ENCODE measurements at regions of chrX and their contacts with region 1.

Region 1: DNA sequence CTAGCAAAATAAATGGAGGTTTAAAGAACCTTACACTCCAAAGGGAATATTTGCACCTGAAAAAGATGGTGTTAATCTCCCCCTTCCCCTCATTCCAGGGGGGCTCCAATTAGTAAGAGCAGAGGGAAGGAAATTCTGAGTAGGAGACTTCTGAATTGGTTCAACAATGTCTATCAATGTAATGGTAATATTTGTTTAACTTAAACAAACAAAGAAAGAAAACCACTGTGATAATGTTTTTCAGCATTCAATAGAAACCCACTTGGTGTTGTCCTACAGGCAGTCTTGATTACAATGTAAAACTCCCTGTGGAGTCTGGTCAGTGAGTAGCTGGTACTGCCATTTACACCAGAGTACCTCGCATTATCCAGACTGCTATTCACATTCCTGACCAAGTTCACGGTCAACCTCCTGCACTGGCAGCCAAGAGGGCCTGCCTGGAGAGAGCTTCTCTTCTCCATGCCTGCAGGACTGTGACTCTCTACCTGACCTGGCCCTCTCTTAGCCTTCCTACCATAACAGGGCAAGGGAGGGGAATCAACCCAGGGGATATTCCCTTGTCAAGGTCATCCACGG is 3.0 kb upstream of the LONRF3 start:
- DNase-seq: no peak
- ATAC-seq: no peak
- H3K4me3 ChIP-seq: no peak overlapping the region
- H3K27ac ChIP-seq: no peak overlapping the region
- H3K4me1 ChIP-seq: peaks cover 5% of the 10 kb centered on the region
- H3K27me3 ChIP-seq: peaks cover 9% of the 10 kb centered on the region
- CTCF ChIP-seq: no peak

Region 2: GRCh38 chrX:118495061-118495921 is 476.2 kb before region 1 on chrX and contains the start of gene DOCK11:
- CTCF ChIA-PET with region 1: interaction called, 15 read pairs
- POLR2A ChIA-PET with region 1: no interaction called
- in situ Hi-C with region 1: no loop called
- intact Hi-C with region 1: no loop called
- DNase-seq: no peak
- ATAC-seq: peak; percentile 89
- H3K4me3 ChIP-seq: peak within 1 kb of the TSS; percentile 53 to 59
- H3K27ac ChIP-seq: no peak within 1 kb of the TSS
- H3K4me1 ChIP-seq: peaks cover 8% of the 10 kb centered on the region
- H3K27me3 ChIP-seq: peaks cover 12% of the 10 kb centered on the region
- CTCF ChIP-seq: no peak
- total RNA-seq, gene DOCK11: 2.0 TPM

Region 3: GRCh38 chrX:119055687-119056086 is 84.2 kb after region 1 on chrX:
- CTCF ChIA-PET with region 1: interaction called, 12 read pairs
- POLR2A ChIA-PET with region 1: no interaction called
- in situ Hi-C with region 1: no loop called
- intact Hi-C with region 1: no loop called
- DNase-seq: no peak
- ATAC-seq: peak; percentile 76
- H3K4me3 ChIP-seq: no peak overlapping the region
- H3K27ac ChIP-seq: no peak overlapping the region
- H3K4me1 ChIP-seq: no peaks in the 10 kb centered on the region; the same call in 1 of the 2 replicates
- H3K27me3 ChIP-seq: no peaks in the 10 kb centered on the region
- CTCF ChIP-seq: no peak